ENCODE measurements at regions of chrX and their contacts with region 1.

Region 1: DNA sequence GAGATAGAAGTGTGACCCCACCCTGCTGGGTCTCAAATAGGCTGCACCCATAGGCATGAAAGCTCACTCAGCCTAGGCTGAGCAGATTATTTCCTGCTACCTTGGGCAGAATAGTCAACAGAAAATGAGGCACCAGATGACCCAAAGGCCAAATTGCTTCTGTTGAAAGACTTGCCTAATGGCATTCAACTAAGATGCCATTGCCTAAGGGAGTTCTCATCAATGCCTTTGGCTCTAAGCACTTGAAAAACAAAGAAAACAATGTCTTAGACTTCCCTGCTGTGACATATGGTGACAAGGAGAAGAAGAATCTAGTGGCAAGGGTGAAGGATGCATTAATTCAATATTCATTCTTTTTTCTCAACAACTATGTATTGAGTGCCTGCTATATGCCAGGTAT is 25.6 kb upstream of the PCDH19 start:
- H3K4me3 ChIP-seq: no peak overlapping the region
- H3K27ac ChIP-seq: no peak overlapping the region
- H3K4me1 ChIP-seq: no peaks in the 10 kb centered on the region
- CTCF ChIP-seq: no peak

Region 2: DNA sequence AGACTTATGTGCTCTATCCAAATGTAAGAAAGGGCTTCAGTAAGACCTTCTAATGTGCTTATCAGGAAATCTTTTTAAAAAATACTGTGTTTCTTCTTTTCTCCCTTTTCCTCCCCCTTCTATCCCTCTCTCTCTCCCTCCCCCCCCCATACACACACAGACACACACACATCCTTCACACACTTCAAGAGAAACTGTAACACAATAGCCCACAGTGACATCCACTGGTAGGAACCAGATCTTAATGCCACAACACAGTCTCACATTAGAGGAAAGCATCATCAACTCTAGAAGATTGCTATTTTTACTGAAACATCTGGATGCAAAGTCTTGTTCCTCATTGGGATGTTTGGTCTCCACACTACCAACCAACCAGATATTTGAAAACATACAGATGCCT is 30.3 kb before region 1 on chrX:
- CTCF ChIA-PET with region 1: no interaction called
- POLR2A ChIA-PET with region 1: no interaction called
- H3K4me3 ChIP-seq: no peak overlapping the region
- H3K27ac ChIP-seq: no peak overlapping the region
- H3K4me1 ChIP-seq: no peaks in the 10 kb centered on the region
- CTCF ChIP-seq: no peak

Region 3: DNA sequence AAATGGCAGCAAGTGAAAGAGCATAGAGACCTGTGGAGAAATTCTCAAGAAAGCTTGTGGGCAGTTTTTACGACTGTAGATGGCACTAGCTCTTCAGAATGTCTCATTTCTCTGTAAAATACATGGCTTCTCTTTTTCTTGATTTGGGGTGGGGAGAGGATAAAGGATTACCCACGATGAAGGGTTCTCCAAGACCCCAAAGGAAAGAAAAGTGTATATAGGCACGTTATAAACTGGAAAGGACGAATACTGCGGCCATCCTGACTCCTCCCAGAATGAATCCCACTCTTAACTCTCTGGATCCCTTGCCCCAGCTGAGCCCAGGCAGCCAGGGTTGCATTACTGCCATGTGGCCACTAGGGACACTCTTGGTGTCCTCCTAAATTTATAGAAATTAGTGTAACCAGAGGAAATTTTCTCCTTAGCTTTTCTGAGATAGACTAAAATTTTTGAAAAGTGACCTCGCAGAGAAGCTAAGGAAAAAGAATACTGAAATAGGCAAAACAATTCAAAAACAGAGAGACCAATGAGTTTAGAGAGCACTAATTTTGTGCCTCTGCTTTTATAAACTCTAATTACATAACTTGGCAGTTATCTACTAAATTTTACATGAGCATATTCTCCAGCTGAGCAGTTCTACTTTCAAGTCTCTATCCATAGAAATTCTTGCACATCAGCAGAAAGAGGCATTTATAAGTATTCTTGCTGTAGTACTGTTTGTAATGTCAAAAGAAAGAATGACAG is 12.1 kb after region 1 on chrX:
- CTCF ChIA-PET with region 1: interaction called, 13 read pairs
- POLR2A ChIA-PET with region 1: no interaction called
- H3K4me3 ChIP-seq: no peak overlapping the region
- H3K27ac ChIP-seq: no peak overlapping the region
- H3K4me1 ChIP-seq: no peaks in the 10 kb centered on the region
- CTCF ChIP-seq: peak; percentile 36; the same call in 1 of the 2 replicates

Region 4: DNA sequence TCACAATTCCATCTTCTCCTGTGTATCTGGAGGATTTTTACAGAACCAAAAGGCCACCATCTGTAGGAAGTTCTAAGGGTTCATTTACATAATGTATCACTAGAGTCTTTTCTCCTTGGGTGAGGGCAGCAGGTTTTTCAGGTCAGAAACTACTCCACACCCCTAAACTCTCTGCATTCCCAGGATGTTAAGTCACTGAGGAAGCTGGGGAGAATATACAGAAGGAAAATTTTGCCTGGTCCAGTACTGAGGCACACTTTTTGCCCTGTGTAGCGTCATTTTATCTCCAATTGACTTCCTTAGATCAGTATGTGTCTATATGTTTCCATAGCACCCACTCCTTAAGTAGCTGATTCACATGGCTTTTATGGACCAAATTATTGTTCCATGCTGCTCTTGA is 476.0 kb after region 1 on chrX:
- CTCF ChIA-PET with region 1: no interaction called
- POLR2A ChIA-PET with region 1: no interaction called
- H3K4me3 ChIP-seq: no peak overlapping the region
- H3K27ac ChIP-seq: no peak overlapping the region
- H3K4me1 ChIP-seq: no peaks in the 10 kb centered on the region
- CTCF ChIP-seq: no peak

Measured in HEK293 (cell line).